HEK293T (cell line): ENCODE measurements at regions of chr19 and their contacts with region 1.

Region 1: GRCh38 chr19:19554074-19555023 is 16.3 kb downstream of the CILP2 start:
- DNase-seq: peak; percentile 85

Region 2: DNA sequence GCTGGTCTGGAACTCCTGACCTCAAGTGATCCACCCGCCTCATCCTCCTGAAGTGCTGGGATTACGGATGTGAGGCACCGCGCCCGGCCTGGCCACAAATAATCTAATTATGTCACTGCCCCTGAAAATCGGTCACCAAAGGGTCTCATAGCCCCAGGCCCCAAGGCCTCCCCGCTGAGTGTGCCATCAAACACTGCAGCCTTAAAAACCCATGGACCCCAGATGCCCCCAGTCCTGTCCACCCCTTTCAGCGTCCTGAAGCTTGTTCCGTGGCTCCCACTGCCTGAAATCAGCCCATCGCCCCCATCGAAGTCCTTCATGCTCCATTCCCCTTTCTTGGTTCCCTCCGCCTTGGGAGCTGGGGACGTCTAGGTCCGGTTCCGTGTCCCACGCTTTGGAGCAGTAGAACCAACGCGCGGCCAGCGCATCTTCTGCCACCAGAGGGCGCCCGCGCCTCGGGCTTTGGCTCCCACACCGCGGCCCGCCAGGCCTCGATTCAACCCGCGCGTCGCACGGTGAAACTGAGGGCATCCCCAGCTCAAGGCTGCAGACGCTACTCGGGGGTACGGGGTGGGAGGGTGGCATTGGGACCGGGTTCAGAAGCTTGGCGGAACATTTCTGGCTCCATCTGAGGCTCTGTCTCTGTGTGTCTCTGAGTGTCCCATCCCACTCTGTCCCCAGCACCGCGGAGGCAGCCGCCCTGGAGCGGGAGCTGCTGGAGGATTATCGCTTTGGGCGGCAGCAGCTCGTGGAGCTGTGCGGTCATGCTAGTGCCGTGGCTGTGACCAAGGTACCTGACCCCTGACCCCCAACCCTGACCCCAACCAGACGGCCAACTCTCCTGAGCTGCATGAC is 22.2 kb before region 1 on chr19:
- CTCF ChIA-PET with region 1: interaction called, 40 read pairs
- POLR2A ChIA-PET with region 1: interaction called, 3 read pairs
- DNase-seq: peak; percentile 82

Region 3: GRCh38 chr19:19575411-19575810 is 21.1 kb after region 1 on chr19:
- CTCF ChIA-PET with region 1: interaction called, 10 read pairs
- POLR2A ChIA-PET with region 1: no interaction called
- DNase-seq: no peak